Common myeloid progenitor, CD34-positive (primary cell): ENCODE measurements at regions of chr21 and their contacts with region 1.

Region 1: DNA sequence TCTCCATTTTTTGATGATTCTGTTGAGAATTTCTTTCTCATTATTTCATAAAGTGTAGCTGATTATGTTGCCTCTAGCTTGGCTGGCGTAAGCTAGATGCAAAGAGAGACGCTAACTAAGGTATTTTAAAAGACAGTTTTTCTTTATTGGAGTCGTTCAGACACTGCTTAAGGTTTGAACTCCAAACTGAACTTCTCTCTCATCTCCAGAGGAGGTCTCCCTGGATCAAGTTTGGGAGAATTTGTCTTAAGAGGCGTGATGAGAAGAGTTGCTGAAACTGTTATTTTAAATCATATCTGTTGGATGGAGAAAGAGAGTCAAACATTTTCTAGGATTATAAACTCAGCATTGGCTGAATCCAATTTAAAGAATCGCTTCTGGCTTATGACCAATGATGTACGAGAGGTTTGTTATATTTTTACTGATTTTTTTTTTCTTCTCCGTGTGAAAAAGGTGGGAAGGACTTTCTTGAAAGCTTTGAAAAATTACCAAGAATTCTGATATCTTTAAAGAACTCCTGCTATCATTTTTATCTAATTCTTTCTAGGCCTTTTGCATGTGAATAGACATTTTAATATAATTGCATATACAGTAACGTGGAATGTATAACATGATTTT is 34.0 kb downstream of the MAP3K7CL start:
- DNase-seq: peak; percentile 50 to 78 (median 75)
- H3K4me3 ChIP-seq: no peak overlapping the region
- H3K27ac ChIP-seq: no peak overlapping the region
- H3K4me1 ChIP-seq: no peaks in the 10 kb centered on the region
- H3K27me3 ChIP-seq: no peaks in the 10 kb centered on the region

Region 2: GRCh38 chr21:29228306-29228705 is 63.9 kb after region 1 on chr21:
- CTCF ChIA-PET with region 1: no interaction called
- POLR2A ChIA-PET with region 1: no interaction called
- DNase-seq: peak; percentile 22 to 80 (median 68)
- H3K4me3 ChIP-seq: peak overlapping the region in 1 of 7 experiments; percentile 0
- H3K27ac ChIP-seq: peak overlapping the region in 1 of 2 experiments; percentile 10
- H3K4me1 ChIP-seq: peaks cover 13 to 21% (median 21%) of the 10 kb centered on the region in 4 experiments
- H3K27me3 ChIP-seq: no peaks in the 10 kb centered on the region

Region 3: DNA sequence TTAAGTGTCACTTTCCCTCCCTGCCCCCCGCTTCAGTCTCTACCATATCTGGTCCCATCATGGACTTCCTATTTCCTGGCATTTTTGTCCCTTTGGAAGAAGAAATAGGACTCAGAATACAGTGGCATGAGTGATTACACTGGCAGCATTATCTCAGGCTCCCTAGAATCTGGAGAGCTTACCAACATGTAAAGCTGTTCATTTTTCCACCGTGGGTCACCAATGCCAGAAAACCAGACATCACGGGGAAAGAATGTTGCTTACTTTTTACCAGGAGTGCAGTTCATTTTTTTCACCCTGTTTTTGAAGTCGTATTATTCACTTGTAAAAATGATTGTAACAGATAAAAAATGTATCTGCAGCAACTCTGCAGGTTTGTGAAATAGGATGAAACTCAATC is 179.1 kb after region 1 on chr21:
- CTCF ChIA-PET with region 1: interaction called, 20 read pairs
- POLR2A ChIA-PET with region 1: no interaction called
- DNase-seq: no peak
- H3K4me3 ChIP-seq: no peak overlapping the region
- H3K27ac ChIP-seq: no peak overlapping the region
- H3K4me1 ChIP-seq: peaks cover 4 to 19% (median 7%) of the 10 kb centered on the region in 4 experiments
- H3K27me3 ChIP-seq: no peaks in the 10 kb centered on the region

Region 4: DNA sequence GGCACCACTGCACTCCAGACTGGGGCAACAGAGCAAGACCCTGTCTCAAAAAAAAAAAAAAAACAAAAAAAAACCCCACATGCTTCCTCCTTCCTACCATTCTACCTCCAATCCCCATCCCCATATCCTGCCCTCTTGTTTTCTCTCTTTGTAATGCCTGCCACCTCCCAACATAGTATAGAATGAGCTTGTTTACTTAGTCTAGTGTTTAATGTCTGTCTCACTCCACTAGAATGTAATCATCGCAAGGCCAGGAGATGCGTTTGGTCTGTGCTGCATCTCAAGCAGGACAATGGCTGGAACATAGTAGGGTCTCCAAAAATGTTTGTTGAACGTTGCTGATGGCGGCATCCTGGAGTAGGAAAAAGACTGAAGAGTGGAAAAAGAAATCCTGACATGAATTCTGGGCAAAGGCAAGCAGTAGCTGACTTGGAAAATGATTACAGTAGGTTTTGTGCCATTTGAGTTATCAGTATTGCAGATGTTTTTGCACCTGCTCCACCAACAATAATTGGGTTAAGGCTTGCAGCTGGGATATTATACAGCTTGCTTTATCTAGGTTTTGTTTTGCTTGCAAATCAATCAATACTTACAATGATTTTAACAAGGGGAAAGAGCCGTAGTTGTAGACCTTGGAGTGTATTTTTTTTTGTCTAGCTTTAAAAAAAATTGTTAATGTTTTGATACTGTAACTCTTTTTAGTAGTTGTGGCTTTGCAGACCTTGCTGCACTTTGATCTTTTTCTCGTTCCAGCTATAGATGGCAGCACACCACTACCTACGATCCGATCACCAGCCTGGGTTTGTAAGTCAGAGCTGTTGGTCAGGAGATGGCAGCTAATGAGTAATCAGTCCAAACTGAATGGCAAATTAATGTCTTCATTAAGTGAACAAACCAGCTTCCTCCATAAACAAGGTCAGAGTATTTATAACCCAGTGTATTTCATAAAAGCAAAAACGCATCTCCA is 196.6 kb after region 1 on chr21:
- CTCF ChIA-PET with region 1: interaction called, 10 read pairs
- POLR2A ChIA-PET with region 1: no interaction called
- DNase-seq: peak; percentile 12 to 29 (median 21)
- H3K4me3 ChIP-seq: no peak overlapping the region
- H3K27ac ChIP-seq: no peak overlapping the region
- H3K4me1 ChIP-seq: no peaks in the 10 kb centered on the region
- H3K27me3 ChIP-seq: no peaks in the 10 kb centered on the region